CD4-positive, alpha-beta T cell (primary cell): ENCODE measurements at regions of chr19 and their contacts with region 1.

Region 1: DNA sequence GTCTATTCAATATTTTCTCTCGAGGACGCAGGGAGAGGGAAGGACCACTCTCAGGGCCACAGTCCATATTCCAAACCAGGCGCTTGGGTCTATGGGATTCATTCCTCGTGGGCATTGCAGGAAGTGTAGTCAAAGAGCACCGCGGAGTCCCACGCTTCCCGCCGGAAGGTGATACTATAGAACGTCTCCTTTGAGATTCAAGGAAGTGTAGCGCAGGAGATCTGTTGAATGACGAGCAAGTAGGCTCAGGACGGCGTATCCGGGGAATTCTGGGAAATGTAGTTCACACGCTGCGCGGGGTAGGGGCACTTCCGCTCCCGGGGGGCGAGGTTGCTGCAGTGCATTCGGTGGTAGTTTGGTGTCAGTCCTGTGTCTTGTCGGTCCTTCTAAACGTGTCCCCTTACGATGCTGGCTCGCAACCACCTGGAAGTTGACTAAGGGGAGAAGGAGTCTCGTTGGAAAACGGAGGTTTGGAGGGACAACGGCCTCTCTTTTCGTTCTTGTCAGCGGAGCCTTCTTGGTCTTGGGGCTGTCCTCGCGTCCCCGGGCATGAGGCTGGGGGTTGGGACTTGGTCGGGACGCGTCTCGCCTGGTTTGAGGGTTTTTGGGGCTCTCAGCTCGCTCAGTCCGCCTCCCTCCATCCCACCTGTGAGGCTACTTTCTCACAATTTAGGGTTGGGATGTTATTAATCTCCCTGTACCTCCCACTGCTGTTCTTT is at the start of gene ZNF284:
- DNase-seq: peak; percentile 65 to 93 (median 78)
- ATAC-seq: peak; percentile 98
- H3K4me3 ChIP-seq: peak within 1 kb of the TSS; percentile 78
- H3K4me3 Mint-ChIP-seq: peak within 1 kb of the TSS; percentile 90
- H3K27ac ChIP-seq: peak within 1 kb of the TSS; percentile 39 to 43
- H3K27ac Mint-ChIP-seq: peak within 1 kb of the TSS; percentile 79
- H3K4me1 ChIP-seq: peaks cover 18% of the 10 kb centered on the region
- H3K4me1 Mint-ChIP-seq: peaks cover 24% of the 10 kb centered on the region
- H3K27me3 ChIP-seq: no peaks in the 10 kb centered on the region
- H3K27me3 Mint-ChIP-seq: no peaks in the 10 kb centered on the region
- CTCF ChIP-seq: no peak
- total RNA-seq, gene ZNF284: 0.92 to 1.2 TPM

Region 2: GRCh38 chr19:43687660-43687997 is 384.4 kb before region 1 on chr19:
- CTCF ChIA-PET with region 1: no interaction called
- POLR2A ChIA-PET with region 1: no interaction called
- intact Hi-C with region 1: no loop called
- DNase-seq: no peak
- ATAC-seq: no peak
- H3K4me3 ChIP-seq: no peak overlapping the region
- H3K4me3 Mint-ChIP-seq: no peak overlapping the region
- H3K27ac ChIP-seq: no peak overlapping the region
- H3K27ac Mint-ChIP-seq: no peak overlapping the region
- H3K4me1 ChIP-seq: no peaks in the 10 kb centered on the region
- H3K4me1 Mint-ChIP-seq: no peaks in the 10 kb centered on the region
- H3K27me3 ChIP-seq: no peaks in the 10 kb centered on the region
- H3K27me3 Mint-ChIP-seq: peaks cover 5% of the 10 kb centered on the region
- CTCF ChIP-seq: no peak

Region 3: GRCh38 chr19:43983912-43984686 is 87.9 kb before region 1 on chr19 and contains the start of gene ZNF155:
- CTCF ChIA-PET with region 1: no interaction called
- POLR2A ChIA-PET with region 1: no interaction called
- intact Hi-C with region 1: loop called in 1 of 2 experiments (anchors 5 kb)
- DNase-seq: peak; percentile 39 to 88 (median 56)
- ATAC-seq: peak; percentile 88
- H3K4me3 ChIP-seq: peak within 1 kb of the TSS; percentile 85
- H3K4me3 Mint-ChIP-seq: peak within 1 kb of the TSS; percentile 97
- H3K27ac ChIP-seq: peak within 1 kb of the TSS in 1 of 2 donors; percentile 72
- H3K27ac Mint-ChIP-seq: peak within 1 kb of the TSS; percentile 83
- H3K4me1 ChIP-seq: peaks cover 16% of the 10 kb centered on the region
- H3K4me1 Mint-ChIP-seq: peaks cover 22% of the 10 kb centered on the region
- H3K27me3 ChIP-seq: no peaks in the 10 kb centered on the region
- H3K27me3 Mint-ChIP-seq: no peaks in the 10 kb centered on the region
- CTCF ChIP-seq: no peak
- total RNA-seq, gene ZNF155: 3.5 to 4.0 TPM

Region 4: DNA sequence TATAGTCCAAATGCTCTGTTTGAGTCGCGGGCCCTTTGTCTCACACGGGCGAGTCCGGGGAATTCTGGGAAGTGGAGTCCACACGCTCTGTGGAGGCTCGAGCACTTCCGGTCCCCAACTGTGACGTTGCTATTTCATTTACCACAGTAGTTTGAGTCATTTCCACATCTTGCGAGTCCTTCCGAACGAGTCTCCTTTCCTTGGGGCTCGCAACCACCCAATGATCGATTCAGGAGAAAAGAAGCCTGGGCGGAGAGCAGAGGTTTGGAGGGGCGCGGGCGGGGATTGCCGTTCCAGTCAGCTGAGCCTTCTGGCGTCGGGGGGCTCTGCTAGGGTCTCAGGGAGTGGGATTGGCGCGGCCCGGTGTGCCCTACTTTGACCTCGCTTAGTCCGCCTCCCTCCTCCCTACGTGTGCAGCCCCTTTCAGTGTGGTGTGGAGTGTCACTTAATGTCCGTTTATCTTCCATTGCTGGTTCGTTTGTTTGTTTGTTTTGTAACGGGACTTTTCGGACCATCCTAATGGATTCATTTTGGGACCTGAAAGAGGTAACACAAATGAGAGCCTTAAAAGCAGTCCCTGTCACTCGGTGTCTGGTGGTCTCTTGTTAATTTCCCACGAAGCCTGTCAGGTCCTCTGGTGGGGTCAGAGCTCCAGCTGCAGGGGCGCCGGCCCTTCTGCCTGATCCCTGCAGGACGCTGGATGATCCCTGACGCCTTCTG is 46.6 kb before region 1 on chr19 and contains the start of gene ZNF222:
- CTCF ChIA-PET with region 1: no interaction called
- POLR2A ChIA-PET with region 1: no interaction called
- intact Hi-C with region 1: loop called in 1 of 2 experiments (anchors 2 kb)
- DNase-seq: peak; percentile 53 to 90 (median 70)
- ATAC-seq: peak; percentile 97
- H3K4me3 ChIP-seq: peak within 1 kb of the TSS; percentile 79
- H3K4me3 Mint-ChIP-seq: peak within 1 kb of the TSS; percentile 98
- H3K27ac ChIP-seq: no peak within 1 kb of the TSS
- H3K27ac Mint-ChIP-seq: peak within 1 kb of the TSS; percentile 88
- H3K4me1 ChIP-seq: peaks cover 14% of the 10 kb centered on the region
- H3K4me1 Mint-ChIP-seq: peaks cover 30% of the 10 kb centered on the region
- H3K27me3 ChIP-seq: no peaks in the 10 kb centered on the region
- H3K27me3 Mint-ChIP-seq: peaks cover 9% of the 10 kb centered on the region
- CTCF ChIP-seq: no peak
- total RNA-seq, gene ZNF222: 4.5 to 5.8 TPM

Region 5: GRCh38 chr19:44113138-44113783 is 41.3 kb after region 1 on chr19 and contains the start of gene ZNF225:
- CTCF ChIA-PET with region 1: no interaction called
- POLR2A ChIA-PET with region 1: no interaction called
- intact Hi-C with region 1: loop called in 1 of 2 experiments (anchors 1 kb)
- DNase-seq: peak; percentile 55 to 94 (median 72)
- ATAC-seq: peak; percentile 89
- H3K4me3 ChIP-seq: peak within 1 kb of the TSS; percentile 75
- H3K4me3 Mint-ChIP-seq: peak within 1 kb of the TSS; percentile 95
- H3K27ac ChIP-seq: peak within 1 kb of the TSS in 1 of 2 donors; percentile 29
- H3K27ac Mint-ChIP-seq: peak within 1 kb of the TSS; percentile 57
- H3K4me1 ChIP-seq: peaks cover 17% of the 10 kb centered on the region
- H3K4me1 Mint-ChIP-seq: peaks cover 37% of the 10 kb centered on the region
- H3K27me3 ChIP-seq: no peaks in the 10 kb centered on the region
- H3K27me3 Mint-ChIP-seq: no peaks in the 10 kb centered on the region
- CTCF ChIP-seq: no peak
- total RNA-seq, gene ZNF225: 0.71 to 0.73 TPM